ENCODE measurements at regions of chr5 and their contacts with region 1.

Region 1: DNA sequence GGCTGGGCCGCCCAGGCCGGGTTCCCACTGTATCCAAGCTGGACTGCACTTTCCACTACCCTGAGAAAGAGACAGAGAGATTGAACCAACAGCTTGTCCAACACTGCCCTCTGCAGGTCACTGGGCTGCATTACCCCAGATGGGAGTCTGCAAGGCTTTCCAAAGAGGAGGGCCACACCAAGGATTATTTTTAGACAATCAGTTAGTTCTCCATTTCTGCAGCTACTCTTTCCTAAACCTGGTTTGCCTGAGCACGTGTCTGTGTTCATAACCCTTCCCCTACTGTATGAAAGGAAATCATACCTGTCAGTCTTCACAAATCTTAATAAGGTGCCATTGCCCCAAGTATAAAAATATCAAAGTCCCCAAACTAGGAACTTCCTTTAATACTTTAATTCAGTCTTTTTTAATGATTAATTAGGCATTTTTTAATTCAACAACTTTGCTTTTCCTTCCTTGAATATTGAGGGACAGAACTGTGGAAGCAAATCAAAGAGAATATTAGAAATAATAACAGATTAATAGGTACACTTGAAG is 13.4 kb upstream of the FGF1 start:
- DNase-seq: peak; percentile 81
- H3K4me3 ChIP-seq: no peak overlapping the region
- H3K27ac ChIP-seq: no peak overlapping the region
- H3K4me1 ChIP-seq: no peaks in the 10 kb centered on the region
- H3K27me3 ChIP-seq: no peaks in the 10 kb centered on the region
- CTCF ChIP-seq: peak; percentile 87 to 96 (median 94)
- POLR2A ChIP-seq: no peak

Region 2: DNA sequence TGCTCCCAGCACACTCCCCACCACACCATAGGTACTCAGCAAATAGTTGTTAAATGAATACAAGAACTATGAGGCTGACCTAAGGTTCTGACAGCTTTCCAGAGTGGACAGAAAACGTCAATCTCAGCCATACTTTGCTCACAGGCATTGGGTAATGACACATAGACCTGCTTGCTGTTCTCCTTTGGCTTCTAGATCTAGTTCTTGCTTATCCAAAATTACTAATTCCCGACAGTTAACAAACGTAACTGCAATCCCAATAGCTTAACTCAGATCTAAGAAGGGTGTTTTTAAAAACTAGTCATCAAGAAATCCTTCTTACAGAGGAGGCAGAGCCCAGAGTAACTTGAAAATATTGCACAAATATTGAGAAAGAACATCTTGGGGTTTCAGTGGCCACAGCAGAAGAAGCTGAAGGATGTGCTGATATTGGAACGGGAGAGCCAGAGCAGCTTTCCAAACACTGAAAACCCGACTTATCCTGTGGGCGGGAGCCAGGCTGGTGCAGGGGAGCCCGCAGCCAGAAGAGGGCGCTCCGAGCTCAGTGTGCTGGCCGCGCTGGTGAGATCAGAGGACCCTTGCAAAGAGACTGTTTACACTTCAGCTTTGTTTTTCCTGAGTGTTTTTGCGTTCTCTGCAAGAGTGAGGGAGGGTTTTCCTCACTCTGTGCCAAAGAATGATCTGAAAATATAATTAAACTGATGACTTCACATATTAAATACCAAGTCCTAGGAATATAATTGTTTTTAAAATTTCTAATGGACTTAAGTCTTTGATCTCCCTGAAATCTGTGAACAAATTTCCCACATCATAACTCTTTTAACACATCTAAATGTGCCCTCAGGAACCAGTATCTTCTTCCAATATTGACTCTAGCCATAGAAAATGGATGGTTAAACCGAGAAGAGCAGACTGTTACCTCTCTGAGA is 43.6 kb before region 1 on chr5:
- intact Hi-C with region 1: loop called (anchors 2 kb)
- DNase-seq: peak; percentile 69
- H3K4me3 ChIP-seq: no peak overlapping the region
- H3K27ac ChIP-seq: no peak overlapping the region
- H3K4me1 ChIP-seq: no peaks in the 10 kb centered on the region
- H3K27me3 ChIP-seq: no peaks in the 10 kb centered on the region
- CTCF ChIP-seq: peak; percentile 88 to 94 (median 90)
- POLR2A ChIP-seq: no peak